ENCODE measurements at regions of chr13 and their contacts with region 1.

Region 1: GRCh38 chr13:29923554-29924481 is 73.4 kb upstream of the UBL3 start:
- DNase-seq: peak; percentile 66
- CTCF ChIP-seq: peak; percentile 74

Region 2: DNA sequence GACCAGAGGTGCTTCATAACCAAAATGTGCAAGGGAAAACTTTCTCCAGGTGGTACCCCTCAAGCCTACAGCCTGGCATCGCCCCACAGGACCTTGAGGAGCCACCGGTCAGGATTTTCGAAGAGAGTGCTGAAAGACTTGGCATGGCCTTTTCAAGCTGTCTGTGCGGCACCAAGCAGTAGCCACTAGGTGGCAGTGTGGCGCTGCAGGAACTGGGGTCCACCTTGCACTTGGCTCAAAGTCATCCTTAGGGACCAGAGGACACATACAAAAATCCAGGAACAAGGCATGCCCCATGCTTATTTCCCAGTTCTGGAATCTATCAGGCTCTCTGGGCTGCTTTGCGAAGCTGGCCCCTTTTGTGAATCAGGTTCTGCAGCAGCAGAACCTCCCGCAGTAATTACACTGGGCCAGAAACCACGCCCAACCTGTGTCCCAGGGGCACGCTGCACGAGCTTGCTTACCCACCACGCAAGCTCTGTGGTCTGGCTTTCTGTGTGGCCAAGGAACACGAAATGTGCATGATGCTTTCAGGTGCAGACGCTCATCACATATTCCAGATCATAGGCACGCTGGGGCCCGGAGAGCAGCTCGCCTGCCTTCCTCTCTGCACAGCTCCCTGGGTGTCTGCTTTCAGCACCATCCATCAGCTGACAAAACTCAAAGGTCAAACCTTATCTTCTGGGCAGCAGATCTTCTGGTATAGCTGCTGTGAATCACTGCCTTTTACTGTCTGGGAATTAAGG is 415.5 kb before region 1 on chr13:
- CTCF ChIA-PET with region 1: interaction called, 22 read pairs
- POLR2A ChIA-PET with region 1: no interaction called
- DNase-seq: peak; percentile 85
- CTCF ChIP-seq: peak; percentile 99

Region 3: DNA sequence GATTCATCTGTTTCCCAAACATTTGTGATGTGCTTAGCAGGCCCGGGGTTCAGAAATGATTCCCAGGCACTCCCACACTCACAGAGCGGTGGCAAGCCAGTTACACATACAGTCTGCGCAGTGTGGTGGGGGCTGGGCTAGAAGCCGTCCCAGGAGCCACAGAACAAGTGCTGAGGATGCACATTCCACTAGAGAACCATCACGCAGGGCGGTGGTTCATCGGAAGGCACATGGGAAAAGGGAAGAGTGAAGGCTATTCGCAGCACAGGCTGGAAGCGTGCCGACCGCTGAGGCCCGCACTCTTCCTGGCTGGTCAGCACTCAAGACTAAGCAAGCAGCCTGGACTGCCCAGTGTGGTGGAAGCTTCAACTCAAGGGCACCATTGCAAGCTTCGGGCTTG is 202.1 kb before region 1 on chr13:
- CTCF ChIA-PET with region 1: no interaction called
- POLR2A ChIA-PET with region 1: no interaction called
- DNase-seq: no peak
- CTCF ChIP-seq: no peak

Region 4: DNA sequence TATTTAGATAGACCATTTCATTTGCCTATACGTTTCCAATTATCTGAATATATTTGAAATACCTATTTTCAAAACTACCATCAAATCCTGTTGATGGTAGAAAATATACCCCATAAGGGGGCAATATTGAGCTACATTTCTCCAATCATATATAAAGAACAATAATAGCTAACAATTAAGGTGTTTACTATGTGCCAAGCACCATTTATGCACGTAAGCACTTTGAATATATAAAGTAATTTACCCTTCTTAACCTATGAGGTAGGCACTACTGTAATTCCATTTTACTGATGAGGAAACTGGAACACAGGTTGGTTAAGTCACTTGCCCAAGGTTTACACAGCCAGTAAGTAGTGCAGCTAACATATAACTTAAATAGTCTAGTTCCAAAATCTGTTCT is 152.6 kb before region 1 on chr13:
- CTCF ChIA-PET with region 1: interaction called, 133 read pairs
- POLR2A ChIA-PET with region 1: no interaction called
- DNase-seq: no peak
- CTCF ChIP-seq: peak; percentile 52

Region 5: GRCh38 chr13:29865934-29866333 is 57.9 kb before region 1 on chr13:
- CTCF ChIA-PET with region 1: interaction called, 12 read pairs
- POLR2A ChIA-PET with region 1: no interaction called
- DNase-seq: no peak
- CTCF ChIP-seq: peak; percentile 0

Region 6: DNA sequence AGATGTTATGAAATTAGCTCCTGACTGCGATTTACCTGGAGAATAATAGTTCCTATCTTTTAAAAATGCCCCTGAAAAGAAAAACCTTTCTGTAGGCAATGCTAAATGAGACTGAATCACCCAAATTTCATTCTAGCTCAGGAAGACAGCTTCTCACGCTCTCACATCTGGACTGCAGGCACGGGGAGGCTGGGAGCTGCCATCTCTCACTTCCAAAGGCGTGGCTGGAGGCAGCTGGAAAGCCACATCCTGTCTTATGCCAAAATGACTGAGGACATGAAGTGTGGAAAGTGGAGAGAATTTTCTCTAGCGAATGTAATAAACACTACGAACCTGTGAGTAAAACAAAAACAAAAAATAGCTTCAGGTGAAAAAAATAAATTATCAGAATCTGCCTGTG is 15.4 kb before region 1 on chr13:
- CTCF ChIA-PET with region 1: interaction called, 17 read pairs
- POLR2A ChIA-PET with region 1: no interaction called
- DNase-seq: no peak
- CTCF ChIP-seq: no peak

Region 7: GRCh38 chr13:29948244-29948643 is 24.4 kb after region 1 on chr13:
- CTCF ChIA-PET with region 1: interaction called, 13 read pairs
- POLR2A ChIA-PET with region 1: no interaction called
- DNase-seq: no peak
- CTCF ChIP-seq: no peak

Region 8: DNA sequence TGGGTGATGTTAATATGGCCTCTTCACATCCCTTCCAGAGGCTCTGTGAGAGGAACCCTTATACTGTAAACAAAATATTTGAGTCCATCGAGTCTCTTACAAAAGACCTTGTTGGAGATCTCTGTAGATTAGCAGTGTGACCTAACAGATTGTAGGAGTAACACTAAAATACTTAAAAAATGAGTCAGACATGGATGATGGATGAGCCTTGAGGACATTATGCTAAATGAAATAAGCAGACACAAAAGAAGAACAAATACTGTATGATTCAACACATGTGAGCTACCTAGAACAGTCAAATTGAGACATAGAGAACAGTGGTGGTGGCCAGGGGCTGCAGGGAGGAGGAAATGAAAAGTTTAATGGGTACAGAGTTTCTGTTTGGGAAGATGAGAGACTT is 78.8 kb after region 1 on chr13:
- CTCF ChIA-PET with region 1: no interaction called
- POLR2A ChIA-PET with region 1: no interaction called
- DNase-seq: no peak
- CTCF ChIP-seq: no peak

Region 9: GRCh38 chr13:30382836-30383525 is 459.2 kb after region 1 on chr13:
- CTCF ChIA-PET with region 1: no interaction called
- POLR2A ChIA-PET with region 1: no interaction called
- DNase-seq: no peak
- CTCF ChIP-seq: no peak

Measured in GM10248 (cell line).